A549 (cell line): ENCODE measurements at regions of chr15 and their contacts with region 1.

Region 1: GRCh38 chr15:30991255-30992072 is at the start of gene MTMR10:
- DNase-seq: peak; percentile 77 to 82
- ATAC-seq: peak; percentile 92 to 95
- H3K4me3 ChIP-seq: peak within 1 kb of the TSS; percentile 78
- H3K27ac ChIP-seq: peak within 1 kb of the TSS; percentile 93 to 96
- H3K4me1 ChIP-seq: peaks cover 30% of the 10 kb centered on the region
- CTCF ChIP-seq: no peak
- EP300 ChIP-seq: no peak
- POLR2A ChIP-seq: peak; percentile 84
- RAD21 ChIP-seq: peak in 1 of 2 experiments; percentile 17; a peak in 2 of 5 replicates
- polyA plus RNA-seq, gene MTMR10: 19.3 and 23.1 TPM in 2 replicates

Region 2: GRCh38 chr15:31004220-31004733 is 12.8 kb after region 1 on chr15:
- CTCF ChIA-PET with region 1: interaction called, 6 read pairs
- POLR2A ChIA-PET with region 1: interaction called, 10 read pairs
- DNase-seq: no peak
- ATAC-seq: 0 out of 6 replicates have a peak, but pooled peaks of 1 of the 2 experiments have one; percentile 45
- H3K4me3 ChIP-seq: no peak overlapping the region
- H3K27ac ChIP-seq: no peak overlapping the region
- H3K4me1 ChIP-seq: no peaks in the 10 kb centered on the region
- CTCF ChIP-seq: no peak
- EP300 ChIP-seq: no peak
- POLR2A ChIP-seq: no peak
- RAD21 ChIP-seq: no peak